H1 (cell line): ENCODE measurements at regions of chr14 and their contacts with region 1.

Region 1: DNA sequence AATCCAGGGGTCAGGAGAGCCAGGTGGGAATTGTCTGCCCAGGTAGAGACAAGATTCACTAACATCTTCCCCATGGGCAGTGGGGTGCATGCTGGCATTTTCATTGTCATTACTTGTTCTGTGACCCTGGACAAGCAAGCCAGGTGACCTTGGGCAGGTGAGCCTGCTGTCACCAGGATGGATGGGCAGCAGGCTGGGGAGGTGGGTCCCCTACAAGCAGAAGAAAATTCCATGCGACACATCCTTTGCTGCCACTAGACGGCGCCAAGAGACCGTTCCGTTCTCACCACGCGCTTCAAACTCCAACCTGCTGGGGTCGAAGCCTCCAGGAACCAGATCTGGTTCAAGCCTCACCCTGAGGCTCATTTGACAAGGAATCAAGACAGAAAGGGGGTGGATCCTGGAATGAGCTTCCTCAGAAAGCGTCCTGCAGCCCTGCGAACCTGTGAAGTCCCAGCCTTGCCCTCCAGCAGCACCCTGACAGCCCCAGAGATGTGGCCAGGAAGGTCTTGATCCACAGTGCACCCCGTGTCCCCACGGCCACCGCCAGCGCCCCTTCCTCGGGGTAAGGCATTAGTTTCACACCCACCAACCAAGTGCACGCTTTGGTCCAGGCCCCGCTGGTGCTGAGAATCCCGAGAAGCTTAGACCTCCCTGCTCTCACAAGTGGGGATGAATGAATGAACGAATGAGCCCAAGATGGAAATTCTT is 3.2 kb upstream of the DYNC1H1 start:
- DNase-seq: peak; percentile 70 to 84
- H3K4me3 ChIP-seq: no peak overlapping the region
- H3K27ac ChIP-seq: no peak overlapping the region
- H3K4me1 ChIP-seq: peaks cover 0 to 3% (median under 1%) of the 10 kb centered on the region in 4 experiments; a peak in 2 of 7 replicates
- H3K27me3 ChIP-seq: peaks cover 4 to 26% (median 14%) of the 10 kb centered on the region in 4 experiments
- CTCF ChIP-seq: peak; percentile 92 to 96 (median 95)
- EP300 ChIP-seq: no peak
- POLR2A ChIP-seq: no peak
- RAD21 ChIP-seq: peak; percentile 81 to 91

Region 2: DNA sequence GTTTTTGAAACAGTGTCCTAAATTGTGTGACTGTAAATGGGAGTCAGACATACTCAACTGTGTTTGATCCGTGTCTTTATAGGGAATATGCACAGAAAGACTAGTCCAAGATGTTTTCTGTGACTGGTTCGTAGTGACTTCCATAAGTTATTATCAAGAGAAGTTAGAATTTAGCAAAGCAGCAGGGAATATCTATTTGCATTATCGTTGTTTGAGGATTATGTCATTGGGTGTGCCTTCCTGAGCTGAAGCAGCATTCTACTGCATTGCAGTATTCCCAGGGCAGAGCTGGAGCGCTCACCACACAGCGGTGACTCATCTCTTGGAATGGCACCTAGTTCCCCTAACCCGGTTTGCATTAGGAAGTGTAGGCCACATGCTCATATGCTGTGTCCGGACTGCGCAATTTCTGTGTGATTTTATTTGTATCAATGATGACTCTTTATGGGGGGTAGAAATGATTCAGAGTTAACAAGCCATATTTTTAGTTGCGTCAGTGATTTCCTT is 11.2 kb after region 1 on chr14:
- CTCF ChIA-PET with region 1: interaction called, 23 read pairs
- POLR2A ChIA-PET with region 1: interaction called, 5 read pairs
- DNase-seq: no peak
- H3K4me3 ChIP-seq: no peak overlapping the region
- H3K27ac ChIP-seq: no peak overlapping the region
- H3K4me1 ChIP-seq: no peaks in the 10 kb centered on the region
- H3K27me3 ChIP-seq: no peaks in the 10 kb centered on the region
- CTCF ChIP-seq: no peak
- EP300 ChIP-seq: no peak
- POLR2A ChIP-seq: no peak
- RAD21 ChIP-seq: no peak

Region 3: DNA sequence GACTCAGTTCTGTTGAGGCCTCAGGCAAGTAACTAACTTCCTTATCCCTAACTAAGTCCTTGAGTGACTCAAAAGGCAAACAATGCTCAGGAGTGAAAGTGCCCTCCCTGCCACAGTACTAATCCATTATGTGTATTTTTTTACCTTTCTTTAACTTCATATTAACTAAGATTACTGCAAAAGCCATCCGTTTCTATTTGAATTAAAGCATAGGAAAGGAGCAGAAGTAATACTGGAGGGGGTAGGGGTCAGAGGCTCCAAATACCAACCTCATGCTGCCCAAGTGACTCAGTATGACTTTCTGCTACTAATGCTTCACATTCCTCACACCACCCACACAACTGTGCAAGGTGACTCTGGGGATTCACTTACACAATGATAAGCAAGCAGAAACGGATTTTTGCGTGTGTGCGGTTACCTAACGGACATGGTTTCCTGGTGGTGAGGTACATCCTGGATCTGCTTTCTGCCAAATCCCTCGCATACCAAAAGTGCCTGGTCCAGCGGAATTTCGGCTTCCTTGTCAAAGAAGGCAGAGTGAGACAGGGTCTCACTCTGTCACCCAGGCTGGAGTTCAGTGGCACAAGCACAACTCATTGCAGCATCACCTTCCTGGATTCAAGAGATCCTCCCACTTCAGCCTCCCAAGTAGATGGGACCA is 318.7 kb after region 1 on chr14:
- CTCF ChIA-PET with region 1: no interaction called
- POLR2A ChIA-PET with region 1: no interaction called
- DNase-seq: no peak
- H3K4me3 ChIP-seq: no peak overlapping the region
- H3K27ac ChIP-seq: no peak overlapping the region
- H3K4me1 ChIP-seq: no peaks in the 10 kb centered on the region
- H3K27me3 ChIP-seq: no peaks in the 10 kb centered on the region
- CTCF ChIP-seq: no peak
- EP300 ChIP-seq: no peak
- POLR2A ChIP-seq: no peak
- RAD21 ChIP-seq: no peak

Region 4: GRCh38 chr14:102351026-102351425 is 389.9 kb after region 1 on chr14:
- CTCF ChIA-PET with region 1: no interaction called
- POLR2A ChIA-PET with region 1: no interaction called
- DNase-seq: no peak
- H3K4me3 ChIP-seq: no peak overlapping the region
- H3K27ac ChIP-seq: no peak overlapping the region
- H3K4me1 ChIP-seq: no peaks in the 10 kb centered on the region
- H3K27me3 ChIP-seq: no peaks in the 10 kb centered on the region
- CTCF ChIP-seq: no peak
- EP300 ChIP-seq: no peak
- POLR2A ChIP-seq: no peak
- RAD21 ChIP-seq: no peak